ENCODE measurements at regions of chr12 and their contacts with region 1.

Region 1: DNA sequence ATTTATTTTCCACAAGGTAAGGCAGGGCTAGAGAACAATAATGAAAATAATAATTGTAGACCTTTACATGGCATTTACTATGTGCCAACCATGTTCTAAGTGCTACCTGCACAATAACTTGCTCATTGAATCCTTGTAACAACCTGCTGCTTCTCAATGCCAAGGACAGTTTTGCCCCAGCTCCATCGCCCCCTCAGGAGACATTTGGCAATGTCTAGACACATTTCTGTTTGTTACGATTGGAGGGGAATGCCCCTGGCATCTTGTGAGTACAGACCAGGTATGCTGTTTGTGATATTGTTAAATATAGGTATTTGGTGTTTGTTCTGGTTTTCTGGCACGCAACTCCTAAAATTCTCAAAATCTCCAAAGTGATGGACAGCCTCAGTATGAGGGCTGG is 8.1 kb upstream of the ATXN2 start:
- DNase-seq: no peak
- H3K4me3 ChIP-seq: no peak overlapping the region
- H3K27ac ChIP-seq: no peak overlapping the region
- H3K4me1 ChIP-seq: no peaks in the 10 kb centered on the region
- H3K27me3 ChIP-seq: no peaks in the 10 kb centered on the region
- CTCF ChIP-seq: no peak

Region 2: DNA sequence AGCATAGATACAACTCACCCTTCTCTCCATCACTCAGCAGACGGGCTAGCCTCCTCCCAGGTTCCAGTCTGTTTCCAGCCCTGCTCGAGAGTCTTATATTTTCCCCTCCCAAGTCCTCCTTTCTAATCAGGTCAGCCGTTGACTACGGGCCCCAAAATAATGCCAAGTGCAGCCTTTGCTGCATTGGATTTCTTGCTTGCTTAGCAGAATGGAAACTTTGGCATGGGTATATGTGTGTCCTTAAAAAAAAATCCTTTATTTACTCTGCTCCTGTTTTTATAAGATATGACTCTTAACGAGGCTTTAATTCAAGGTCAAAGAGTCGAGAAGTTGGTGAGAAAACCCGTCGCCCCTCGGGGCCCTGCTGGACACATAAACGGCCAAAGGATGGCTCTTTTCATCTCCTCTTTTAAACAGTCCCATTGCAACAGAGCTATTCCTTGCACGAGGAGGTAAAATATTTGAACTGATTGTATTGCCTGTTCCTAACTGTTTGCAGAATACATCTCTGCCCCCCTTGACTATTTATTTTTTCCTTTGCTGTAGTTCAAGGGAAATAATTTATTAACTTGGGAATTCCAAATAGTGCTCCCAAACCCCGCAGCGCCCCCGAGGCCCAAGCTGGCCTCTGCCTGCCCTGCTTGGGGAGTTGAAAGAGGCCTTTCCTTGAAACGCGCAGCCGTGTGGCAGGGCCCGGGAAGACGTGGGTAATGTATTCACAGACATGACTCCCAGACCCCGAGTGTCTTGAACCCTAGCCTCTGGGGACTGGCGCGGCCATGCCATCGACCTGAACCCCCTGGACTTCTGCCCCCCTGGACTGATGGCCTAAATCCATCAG is 530.4 kb before region 1 on chr12:
- CTCF ChIA-PET with region 1: no interaction called
- dilution Hi-C with region 1: no loop called
- in situ Hi-C with region 1: no loop called
- intact Hi-C with region 1: no loop called
- DNase-seq: no peak
- H3K4me3 ChIP-seq: no peak overlapping the region
- H3K27ac ChIP-seq: no peak overlapping the region
- H3K4me1 ChIP-seq: no peaks in the 10 kb centered on the region
- H3K27me3 ChIP-seq: peaks cover 2% of the 10 kb centered on the region
- CTCF ChIP-seq: no peak

Region 3: GRCh38 chr12:111624540-111624939 is 17.3 kb after region 1 on chr12:
- CTCF ChIA-PET with region 1: interaction called, 42 read pairs
- dilution Hi-C with region 1: no loop called
- in situ Hi-C with region 1: no loop called
- intact Hi-C with region 1: no loop called
- DNase-seq: peak; percentile 56
- H3K4me3 ChIP-seq: no peak overlapping the region
- H3K27ac ChIP-seq: no peak overlapping the region
- H3K4me1 ChIP-seq: no peaks in the 10 kb centered on the region
- H3K27me3 ChIP-seq: no peaks in the 10 kb centered on the region
- CTCF ChIP-seq: no peak